Tibial artery (tissue), 4 donors: ENCODE measurements at regions of chr9 and their contacts with region 1.

Region 1: GRCh38 chr9:71806901-71807307 is 38.6 kb upstream of the CEMIP2 start:
- DNase-seq: peak; percentile 64 to 74
- H3K4me3 ChIP-seq: no peak overlapping the region
- H3K27ac ChIP-seq: no peak overlapping the region
- H3K4me1 ChIP-seq: peaks cover 0 to 17% (median 9%) of the 10 kb centered on the region in 4 donors
- H3K27me3 ChIP-seq: no peaks in the 10 kb centered on the region
- CTCF ChIP-seq: peak; percentile 75 to 92

Region 2: DNA sequence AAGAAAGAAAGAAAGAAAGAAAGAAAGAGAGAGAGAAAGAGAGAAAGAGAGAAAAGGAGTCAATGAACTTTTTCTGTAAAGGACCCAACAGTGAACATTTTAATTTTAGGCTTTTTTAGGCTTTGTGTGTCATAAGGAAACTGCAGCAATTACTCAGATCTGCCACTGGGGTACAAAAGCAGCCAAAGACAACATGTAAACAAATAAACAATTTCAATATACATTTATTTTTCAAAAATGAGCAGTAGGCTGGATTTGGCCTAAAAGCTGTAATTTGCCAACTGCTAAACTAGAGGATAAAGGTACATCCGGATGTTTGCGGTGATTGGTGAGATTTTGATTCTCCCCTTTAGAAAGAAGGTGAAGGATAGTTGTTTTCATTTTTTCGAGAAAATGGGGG is 182.2 kb before region 1 on chr9:
- intact Hi-C with region 1: no loop called
- DNase-seq: no peak
- H3K4me3 ChIP-seq: no peak overlapping the region
- H3K27ac ChIP-seq: no peak overlapping the region
- H3K4me1 ChIP-seq: no peaks in the 10 kb centered on the region
- H3K27me3 ChIP-seq: no peaks in the 10 kb centered on the region
- CTCF ChIP-seq: no peak

Region 3: DNA sequence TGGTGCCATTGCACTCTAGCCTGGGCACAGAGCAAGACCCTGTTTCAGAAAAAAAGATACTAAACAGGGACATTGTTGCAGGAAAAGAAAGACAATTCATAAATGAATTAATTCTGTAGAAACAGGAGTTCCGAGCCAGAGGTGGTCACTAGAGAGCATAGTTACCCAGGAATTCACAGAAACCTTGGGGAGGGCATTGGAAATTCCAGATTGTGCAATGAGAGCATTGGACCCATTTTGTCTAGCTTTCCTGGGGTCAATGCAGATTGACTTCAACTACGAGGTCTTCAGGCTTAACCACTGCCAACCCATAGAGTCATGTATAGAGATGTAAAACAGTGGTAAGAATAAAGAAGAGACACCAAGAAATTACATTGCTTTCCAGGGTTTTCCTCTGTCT is 41.0 kb after region 1 on chr9:
- intact Hi-C with region 1: no loop called
- DNase-seq: no peak
- H3K4me3 ChIP-seq: no peak overlapping the region
- H3K27ac ChIP-seq: no peak overlapping the region
- H3K4me1 ChIP-seq: no peaks in the 10 kb centered on the region
- H3K27me3 ChIP-seq: no peaks in the 10 kb centered on the region
- CTCF ChIP-seq: no peak

Region 4: GRCh38 chr9:71975833-71976232 is 168.9 kb after region 1 on chr9:
- intact Hi-C with region 1: loop called (anchors 10 kb)
- DNase-seq: no peak
- H3K4me3 ChIP-seq: no peak overlapping the region
- H3K27ac ChIP-seq: no peak overlapping the region
- H3K4me1 ChIP-seq: no peaks in the 10 kb centered on the region
- H3K27me3 ChIP-seq: no peaks in the 10 kb centered on the region
- CTCF ChIP-seq: peak in 1 of 2 experiments; percentile 30

Region 5: GRCh38 chr9:72006501-72006900 is 199.6 kb after region 1 on chr9:
- intact Hi-C with region 1: no loop called
- DNase-seq: no peak
- H3K4me3 ChIP-seq: no peak overlapping the region
- H3K27ac ChIP-seq: no peak overlapping the region
- H3K4me1 ChIP-seq: no peaks in the 10 kb centered on the region
- H3K27me3 ChIP-seq: no peaks in the 10 kb centered on the region
- CTCF ChIP-seq: no peak

Region 6: DNA sequence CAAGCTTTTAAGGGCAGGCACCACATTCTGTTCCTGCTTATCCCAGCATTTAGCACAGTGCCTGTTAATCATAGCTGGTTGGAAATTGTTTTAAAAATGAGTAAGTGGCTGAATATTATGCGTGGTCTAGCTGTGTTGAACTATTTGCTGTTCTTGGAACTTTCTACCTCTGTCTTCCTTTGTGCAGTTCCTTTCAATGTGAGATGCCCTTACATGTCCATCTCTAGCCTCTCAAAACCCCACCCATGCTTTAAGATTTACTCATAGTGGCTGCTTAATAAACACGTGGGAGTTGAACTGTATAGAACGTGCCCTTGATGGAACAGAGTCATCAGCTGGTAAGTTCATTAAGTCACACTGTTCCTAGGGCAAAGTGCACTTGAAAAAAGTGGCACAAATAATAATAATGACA is 219.0 kb after region 1 on chr9:
- intact Hi-C with region 1: loop called (anchors 5 kb)
- DNase-seq: no peak
- H3K4me3 ChIP-seq: no peak overlapping the region
- H3K27ac ChIP-seq: no peak overlapping the region
- H3K4me1 ChIP-seq: peaks cover 0 to 6% (median 0%) of the 10 kb centered on the region in 4 donors
- H3K27me3 ChIP-seq: no peaks in the 10 kb centered on the region
- CTCF ChIP-seq: no peak